Transverse colon (tissue), 4 donors: ENCODE measurements at regions of chr18 and their contacts with region 1.

Region 1: GRCh38 chr18:1094409-1094808 is 189.7 kb downstream of the ADCYAP1 start:
- DNase-seq: no peak
- H3K4me3 ChIP-seq: no peak overlapping the region
- H3K27ac ChIP-seq: no peak overlapping the region
- H3K4me1 ChIP-seq: no peaks in the 10 kb centered on the region
- H3K27me3 ChIP-seq: no peaks in the 10 kb centered on the region
- CTCF ChIP-seq: no peak
- EP300 ChIP-seq: no peak
- POLR2A ChIP-seq: no peak

Region 2: GRCh38 chr18:1075322-1075721 is 19.1 kb before region 1 on chr18:
- in situ Hi-C with region 1: no loop called
- intact Hi-C with region 1: loop called (anchors 1 kb)
- DNase-seq: no peak
- H3K4me3 ChIP-seq: no peak overlapping the region
- H3K27ac ChIP-seq: no peak overlapping the region
- H3K4me1 ChIP-seq: no peaks in the 10 kb centered on the region
- H3K27me3 ChIP-seq: no peaks in the 10 kb centered on the region
- CTCF ChIP-seq: no peak
- EP300 ChIP-seq: no peak
- POLR2A ChIP-seq: no peak

Region 3: GRCh38 chr18:1147730-1148129 is 53.3 kb after region 1 on chr18:
- in situ Hi-C with region 1: no loop called
- intact Hi-C with region 1: no loop called
- DNase-seq: no peak
- H3K4me3 ChIP-seq: no peak overlapping the region
- H3K27ac ChIP-seq: no peak overlapping the region
- H3K4me1 ChIP-seq: no peaks in the 10 kb centered on the region
- H3K27me3 ChIP-seq: no peaks in the 10 kb centered on the region
- CTCF ChIP-seq: no peak
- EP300 ChIP-seq: no peak
- POLR2A ChIP-seq: no peak